Right lobe of liver (tissue), 6 donors: ENCODE measurements at regions of chr11 and their contacts with region 1.

Region 1: DNA sequence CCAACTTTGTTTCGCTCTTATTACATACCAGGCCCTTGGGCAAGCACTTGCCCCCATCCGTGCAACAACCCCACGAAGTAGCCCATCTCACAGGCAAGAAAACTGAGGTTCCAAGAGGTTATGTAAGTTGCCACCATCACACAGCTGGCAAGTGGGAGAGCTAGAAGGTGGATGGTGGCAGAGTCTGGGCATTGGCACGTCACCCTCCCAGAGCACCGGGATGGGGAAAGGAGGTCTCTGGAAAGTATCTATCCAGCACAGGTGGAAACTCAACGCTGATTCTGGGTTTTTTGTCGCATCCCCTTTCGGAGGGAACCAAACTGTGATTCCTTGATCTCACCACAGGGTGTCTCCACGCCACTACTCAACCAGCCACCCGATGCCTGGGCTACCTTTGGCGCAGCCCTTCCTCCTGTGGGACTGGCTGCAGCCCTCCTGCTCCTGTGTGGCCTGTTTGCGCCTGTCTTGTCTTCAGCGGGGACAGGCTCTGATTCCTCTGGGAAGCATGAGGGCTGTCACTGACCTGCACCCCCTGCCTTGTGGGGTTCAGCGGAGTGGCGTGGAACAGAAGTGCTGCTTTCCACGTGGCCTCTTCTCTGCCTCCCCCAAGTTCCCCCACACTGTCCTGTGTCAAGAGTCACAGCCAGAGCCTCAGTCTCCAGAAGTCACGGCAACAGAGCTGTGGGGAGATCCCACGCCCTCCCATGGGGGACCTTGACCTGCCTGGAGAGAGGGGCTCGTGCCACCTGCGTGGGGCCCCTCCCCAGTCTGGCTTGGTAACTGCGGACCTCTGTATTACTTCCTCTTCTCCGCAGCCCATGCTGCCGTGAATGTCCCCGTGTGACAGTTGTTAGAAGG is 34.4 kb upstream of the TRIM29 start:
- DNase-seq: peak; percentile 74 to 76 (median 76)
- ATAC-seq: peak; percentile 76 to 80 (median 80)
- H3K4me3 ChIP-seq: no peak overlapping the region
- H3K27ac ChIP-seq: no peak overlapping the region
- H3K4me1 ChIP-seq: peaks cover 0 to 17% (median 3%) of the 10 kb centered on the region in 4 donors
- H3K27me3 ChIP-seq: no peaks in the 10 kb centered on the region
- CTCF ChIP-seq: peak; percentile 76 to 84 (median 80)
- POLR2A ChIP-seq: no peak

Region 2: DNA sequence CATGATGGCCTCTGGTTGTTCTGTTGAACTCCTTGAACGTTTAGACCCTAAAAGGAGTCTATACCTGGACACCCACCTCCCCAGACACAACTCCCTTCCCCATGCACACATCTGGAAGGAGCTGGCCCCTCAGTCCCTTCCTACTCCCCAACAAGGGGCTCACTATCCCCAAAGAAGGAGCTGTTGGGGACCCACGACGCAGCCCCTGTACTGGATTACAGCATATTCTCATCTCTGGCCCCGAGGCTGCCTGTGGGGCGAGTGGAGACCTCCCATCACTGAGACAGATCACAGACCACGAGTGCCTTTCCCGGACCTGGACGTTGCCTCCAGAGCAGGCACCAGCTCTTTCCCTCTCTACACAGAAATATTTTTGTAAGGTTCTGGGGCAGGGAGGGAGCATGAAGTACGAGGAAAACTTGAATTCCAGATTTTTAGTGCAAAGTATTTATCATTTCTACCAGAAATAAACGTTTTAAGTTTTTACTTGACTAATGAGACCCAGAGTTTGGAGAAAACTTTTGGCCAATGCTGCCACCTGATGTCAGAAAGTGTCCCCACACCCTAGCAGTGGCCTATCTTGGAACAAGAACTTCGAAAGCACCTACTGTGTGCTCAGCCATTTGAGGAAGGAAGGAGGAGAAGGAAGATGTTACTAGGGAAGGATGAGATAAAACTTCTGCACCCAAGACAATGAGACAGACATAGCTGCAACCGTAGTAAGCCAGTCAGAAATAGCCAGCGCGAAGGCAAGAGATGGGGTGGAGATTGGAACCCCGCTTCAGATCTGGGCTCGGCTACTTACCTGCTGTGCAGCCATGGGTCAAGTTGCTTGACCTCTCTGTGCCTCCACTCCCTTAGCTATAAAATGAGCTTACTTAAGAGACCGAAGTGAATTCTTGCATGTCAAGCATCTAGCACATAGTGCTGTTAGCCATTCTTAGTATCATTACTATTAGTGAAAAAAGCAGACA is 57.5 kb after region 1 on chr11:
- intact Hi-C with region 1: loop called (anchors 5 kb)
- DNase-seq: no peak
- ATAC-seq: no peak
- H3K4me3 ChIP-seq: no peak overlapping the region
- H3K27ac ChIP-seq: no peak overlapping the region
- H3K4me1 ChIP-seq: peaks cover 0 to 4% (median 0%) of the 10 kb centered on the region in 4 donors
- H3K27me3 ChIP-seq: no peaks in the 10 kb centered on the region
- CTCF ChIP-seq: peak; percentile 49 to 61 (median 56)
- POLR2A ChIP-seq: no peak

Region 3: GRCh38 chr11:120295084-120295483 is 122.8 kb after region 1 on chr11:
- intact Hi-C with region 1: loop called (anchors 5 kb)
- DNase-seq: peak in 1 of 3 donors; percentile 23
- ATAC-seq: peak in 1 of 4 donors; percentile 43
- H3K4me3 ChIP-seq: no peak overlapping the region
- H3K27ac ChIP-seq: no peak overlapping the region
- H3K4me1 ChIP-seq: peaks cover 0 to 13% (median 0%) of the 10 kb centered on the region in 4 donors
- H3K27me3 ChIP-seq: no peaks in the 10 kb centered on the region
- CTCF ChIP-seq: no peak
- POLR2A ChIP-seq: no peak

Region 4: DNA sequence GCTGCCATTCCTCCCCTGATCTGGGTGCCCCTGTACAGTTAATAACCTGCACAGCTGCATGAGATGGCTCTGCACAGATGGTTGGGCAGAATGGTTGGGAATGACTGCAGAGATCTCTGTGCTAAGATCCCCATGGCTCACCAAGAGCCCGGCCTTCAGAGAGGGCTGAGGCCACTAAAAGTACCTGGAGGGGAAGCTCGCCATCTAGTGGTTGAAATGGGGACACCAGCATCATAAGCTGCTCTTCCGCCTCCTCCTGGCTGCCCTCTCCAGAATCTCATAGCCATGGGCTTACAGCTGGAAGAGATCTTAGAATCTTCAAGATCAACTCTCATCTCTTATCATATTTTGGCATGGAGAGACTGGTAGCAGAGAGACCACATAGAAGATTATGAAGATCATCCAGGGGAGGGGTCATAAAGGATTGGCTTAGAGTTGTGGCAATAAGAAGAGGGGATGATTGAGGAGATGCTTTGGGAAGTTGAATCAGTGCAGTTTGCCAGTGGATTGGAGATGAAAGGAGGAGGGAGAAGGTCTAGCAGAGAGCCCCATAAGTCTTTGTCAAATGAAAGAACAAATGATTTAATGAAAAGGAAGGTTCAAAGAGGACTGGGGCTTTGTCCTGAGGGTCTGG is 130.8 kb after region 1 on chr11:
- intact Hi-C with region 1: loop called (anchors 5 kb)
- DNase-seq: peak in 2 of 3 donors; percentile 42 to 75
- ATAC-seq: peak; percentile 61 to 88 (median 84)
- H3K4me3 ChIP-seq: no peak overlapping the region
- H3K27ac ChIP-seq: no peak overlapping the region
- H3K4me1 ChIP-seq: peaks cover 0 to 9% (median 4%) of the 10 kb centered on the region in 4 donors
- H3K27me3 ChIP-seq: no peaks in the 10 kb centered on the region
- CTCF ChIP-seq: peak; percentile 79 to 96 (median 89)
- POLR2A ChIP-seq: no peak